ENCODE measurements at regions of chr15 and their contacts with region 1.

Region 1: DNA sequence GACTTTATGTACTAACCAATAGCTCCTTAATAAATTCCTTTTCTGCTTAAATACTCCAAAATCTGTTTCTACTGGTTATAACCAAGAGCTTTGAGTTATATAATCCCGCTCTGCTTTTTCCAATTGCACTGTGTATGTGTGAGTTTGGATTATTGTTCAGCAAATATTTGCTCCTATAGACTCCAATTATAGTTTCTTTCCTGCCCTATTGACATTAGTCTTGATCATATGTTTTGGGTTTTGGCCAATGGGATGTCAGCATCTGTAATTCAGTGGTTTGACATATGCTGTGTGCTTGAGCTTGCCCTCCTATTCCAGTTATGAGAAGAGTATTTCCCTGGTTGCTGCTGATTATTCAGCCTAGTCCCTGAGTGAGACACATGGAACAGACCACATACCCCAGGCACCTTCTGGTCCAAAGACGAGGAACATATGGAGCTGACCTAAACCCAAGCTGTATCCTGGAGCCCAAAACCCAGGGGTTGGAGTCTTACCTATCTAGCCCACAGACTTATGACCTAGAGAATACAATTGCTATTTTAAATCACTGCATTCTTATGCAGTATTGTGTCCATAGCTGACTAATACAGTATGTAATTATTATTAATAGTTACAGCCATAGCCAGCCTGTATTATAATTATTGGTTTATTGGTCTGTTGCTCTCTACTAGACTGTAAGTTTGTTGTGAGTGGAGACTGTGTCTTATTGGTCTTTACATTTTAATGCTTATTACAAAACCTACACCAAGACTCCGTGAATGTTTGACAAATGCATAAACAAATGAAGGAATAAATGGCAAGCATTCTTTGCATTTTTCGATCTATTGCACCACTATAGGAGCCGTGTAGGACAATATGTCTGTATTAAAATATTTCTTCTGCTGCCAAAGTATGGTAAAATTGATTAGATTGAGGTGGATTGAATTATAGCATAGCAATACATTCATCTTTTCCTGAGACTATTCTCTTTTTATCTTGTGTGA is 11.7 kb upstream of the ZNF280D start:
- DNase-seq: no peak
- H3K4me3 Mint-ChIP-seq: no peak overlapping the region
- H3K27ac Mint-ChIP-seq: no peak overlapping the region
- H3K4me1 Mint-ChIP-seq: no peaks in the 10 kb centered on the region
- H3K27me3 Mint-ChIP-seq: peaks cover 8% of the 10 kb centered on the region

Region 2: DNA sequence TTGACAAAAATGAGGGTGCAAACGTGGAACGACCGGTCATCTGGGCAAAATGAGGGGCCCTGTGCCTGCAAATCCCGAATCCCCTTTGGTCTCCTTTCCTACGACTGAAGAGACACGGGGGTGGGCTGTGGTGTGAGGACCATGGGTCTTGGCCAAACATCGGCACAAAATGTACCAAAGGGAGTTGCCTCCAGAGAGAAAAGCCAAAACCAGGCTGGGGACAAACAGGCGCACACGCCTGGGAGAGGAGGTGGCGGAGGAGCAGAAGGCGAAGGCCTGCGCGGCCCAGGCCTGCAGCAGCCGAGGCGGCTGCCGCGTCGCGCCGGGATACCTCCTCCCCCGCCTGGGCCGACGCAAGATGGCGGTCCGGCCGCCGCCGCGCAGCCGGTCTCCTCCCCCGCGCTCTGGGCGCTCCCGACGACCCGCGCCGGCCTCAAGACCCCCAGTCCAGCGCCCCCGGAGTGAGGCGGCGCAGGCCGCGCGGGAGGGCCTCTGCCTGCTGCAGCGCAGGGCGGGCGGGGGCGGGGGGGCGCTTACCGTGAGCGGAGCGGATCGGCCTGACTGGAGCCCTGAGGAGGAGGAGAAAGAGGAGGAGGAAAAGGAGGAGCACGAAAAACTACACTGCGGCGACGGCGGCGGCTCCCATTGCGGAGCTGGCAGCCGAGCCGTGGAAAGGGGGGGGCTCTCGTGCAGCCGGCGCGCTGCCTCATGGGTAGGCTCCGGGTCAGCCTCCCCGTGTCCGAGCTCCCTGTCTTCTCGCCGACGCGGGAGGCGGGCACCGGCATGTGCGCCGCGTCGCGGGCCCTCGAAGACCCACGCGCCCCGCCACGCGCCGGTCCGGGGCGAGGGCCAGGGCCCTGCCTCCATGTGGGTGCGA is 11.8 kb before region 1 on chr15 and contains the start of gene ZNF280D:
- CTCF ChIA-PET with region 1: no interaction called
- POLR2A ChIA-PET with region 1: interaction called, 10 read pairs
- DNase-seq: peak; percentile 82
- H3K4me3 Mint-ChIP-seq: peak within 1 kb of the TSS; percentile 94
- H3K27ac Mint-ChIP-seq: peak within 1 kb of the TSS; percentile 81
- H3K4me1 Mint-ChIP-seq: peaks cover 35% of the 10 kb centered on the region
- H3K27me3 Mint-ChIP-seq: peaks cover 3% of the 10 kb centered on the region
- total RNA-seq, gene ZNF280D: 23.4 to 24.4 TPM

Region 3: DNA sequence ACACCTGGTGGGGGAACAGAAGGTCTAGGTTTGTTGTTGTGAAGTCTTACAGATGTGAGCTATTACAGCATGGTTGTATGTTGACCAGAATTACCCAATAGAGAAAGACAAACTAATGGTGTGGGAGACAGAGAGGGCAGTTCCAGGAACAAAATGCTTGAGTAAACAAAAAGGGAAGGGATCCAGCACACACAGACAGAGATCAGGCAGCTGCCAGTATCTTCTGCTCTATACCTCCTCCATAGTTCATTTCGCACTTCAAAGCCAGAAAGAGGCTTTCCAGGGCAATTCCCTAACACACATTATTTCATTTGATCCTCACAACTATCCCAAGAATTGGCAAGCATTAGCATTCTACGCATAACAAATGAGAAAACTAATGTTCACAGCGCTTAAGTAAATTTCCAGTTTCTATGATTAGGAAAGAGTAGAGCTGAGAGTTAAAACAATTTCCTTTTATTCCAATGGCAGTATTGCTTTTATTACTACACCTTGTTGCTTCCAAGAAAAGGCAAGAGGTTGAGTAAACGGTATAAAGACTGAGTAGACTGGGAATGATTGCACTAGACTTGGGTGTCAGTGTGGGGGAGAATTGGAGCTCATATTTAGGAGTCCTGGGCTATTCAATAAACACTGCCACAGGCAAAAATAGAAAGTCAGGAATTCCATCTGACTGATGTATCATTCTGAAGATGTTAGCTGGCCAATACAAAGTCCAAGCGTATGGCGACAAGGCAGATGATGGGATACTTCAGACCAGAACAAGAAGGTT is 28.1 kb after region 1 on chr15:
- CTCF ChIA-PET with region 1: no interaction called
- POLR2A ChIA-PET with region 1: no interaction called
- DNase-seq: no peak
- H3K4me3 Mint-ChIP-seq: no peak overlapping the region
- H3K27ac Mint-ChIP-seq: no peak overlapping the region
- H3K4me1 Mint-ChIP-seq: peaks cover 22% of the 10 kb centered on the region
- H3K27me3 Mint-ChIP-seq: peaks cover 14% of the 10 kb centered on the region

Measured in activated CD4-positive, alpha-beta memory T cell treated with anti-CD3 and anti-CD28 coated beads, Interleukin-2, amount 10 ng/mL, durations not matched to agents 7 days and 5 days (primary cell).